WTC11 (cell line): ENCODE measurements at regions of chr3 and their contacts with region 1.

Region 1: DNA sequence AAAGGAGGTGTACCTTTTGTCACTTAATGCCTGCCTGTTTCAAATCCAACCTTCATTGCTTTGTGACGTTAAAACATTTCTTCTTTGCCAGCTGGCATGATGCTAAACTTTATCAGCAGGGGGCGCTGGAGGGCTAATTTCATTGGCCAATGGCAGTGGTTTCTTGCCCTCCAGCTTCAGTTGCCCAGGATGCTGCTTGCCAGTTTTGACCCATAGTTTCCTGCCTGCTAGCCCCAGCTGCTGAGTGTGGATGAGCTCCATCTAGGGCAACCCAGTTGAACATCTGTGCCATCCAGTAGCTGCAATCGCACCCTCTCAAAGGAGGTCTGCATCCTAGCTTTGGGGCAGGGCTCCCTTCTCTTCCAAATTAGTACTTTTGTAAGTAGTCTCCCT is 22.1 kb downstream of the ACKR2 start:
- DNase-seq: peak; percentile 88
- ATAC-seq: peak; percentile 88
- H3K4me3 Mint-ChIP-seq: no peak overlapping the region
- H3K27ac Mint-ChIP-seq: no peak overlapping the region
- H3K4me1 Mint-ChIP-seq: peaks cover 12% of the 10 kb centered on the region
- H3K27me3 Mint-ChIP-seq: no peaks in the 10 kb centered on the region
- CTCF ChIP-seq: peak; percentile 73

Region 2: GRCh38 chr3:42778644-42779043 is 52.7 kb before region 1 on chr3:
- CTCF ChIA-PET with region 1: interaction called, 17 read pairs
- POLR2A ChIA-PET with region 1: no interaction called
- DNase-seq: no peak
- ATAC-seq: no peak
- H3K4me3 Mint-ChIP-seq: no peak overlapping the region
- H3K27ac Mint-ChIP-seq: 0 out of 2 replicates have a peak overlapping the region, but pooled peaks have one; percentile 13
- H3K4me1 Mint-ChIP-seq: peaks cover 6% of the 10 kb centered on the region; the same call in 1 of the 2 replicates
- H3K27me3 Mint-ChIP-seq: no peaks in the 10 kb centered on the region
- CTCF ChIP-seq: no peak

Region 3: GRCh38 chr3:42819351-42819965 is 11.9 kb before region 1 on chr3:
- CTCF ChIA-PET with region 1: interaction called, 31 read pairs
- POLR2A ChIA-PET with region 1: interaction called, 3 read pairs
- DNase-seq: peak; percentile 40
- ATAC-seq: peak; percentile 92
- H3K4me3 Mint-ChIP-seq: no peak overlapping the region
- H3K27ac Mint-ChIP-seq: no peak overlapping the region
- H3K4me1 Mint-ChIP-seq: peaks cover 14% of the 10 kb centered on the region
- H3K27me3 Mint-ChIP-seq: no peaks in the 10 kb centered on the region; the same call in 1 of the 2 replicates
- CTCF ChIP-seq: no peak

Region 4: DNA sequence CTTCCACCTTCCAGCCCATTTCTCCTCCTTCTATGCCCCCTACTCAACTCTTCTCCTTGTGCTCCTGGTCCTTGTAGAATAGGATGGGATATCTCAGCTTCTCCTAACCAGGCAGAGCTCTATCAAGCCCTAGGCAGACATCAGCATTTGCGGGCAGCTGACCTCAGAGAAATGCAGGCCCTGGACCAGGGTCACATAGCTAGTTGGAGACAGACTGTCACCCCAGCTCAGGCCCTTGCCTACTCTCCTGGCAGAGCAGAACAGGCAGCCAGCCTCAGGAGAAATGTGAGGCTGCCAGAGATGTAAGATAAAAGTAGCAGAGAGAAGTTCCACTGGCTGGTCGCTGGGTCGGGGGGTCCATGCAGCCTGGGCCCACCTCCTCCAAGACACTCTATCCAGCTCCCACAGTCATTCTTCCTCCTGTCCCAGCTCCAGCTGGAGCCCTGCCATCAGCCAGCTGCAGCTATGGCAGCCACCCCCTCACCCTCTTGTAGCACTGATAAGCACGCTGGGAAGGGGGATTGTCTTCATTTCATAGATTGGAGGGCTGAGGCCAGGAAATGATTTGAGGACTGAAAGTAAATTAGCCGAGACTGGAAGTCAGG is 40.4 kb after region 1 on chr3:
- CTCF ChIA-PET with region 1: interaction called, 10 read pairs
- POLR2A ChIA-PET with region 1: no interaction called
- DNase-seq: no peak
- ATAC-seq: no peak
- H3K4me3 Mint-ChIP-seq: no peak overlapping the region
- H3K27ac Mint-ChIP-seq: no peak overlapping the region
- H3K4me1 Mint-ChIP-seq: no peaks in the 10 kb centered on the region
- H3K27me3 Mint-ChIP-seq: peaks cover 4% of the 10 kb centered on the region
- CTCF ChIP-seq: no peak

Region 5: DNA sequence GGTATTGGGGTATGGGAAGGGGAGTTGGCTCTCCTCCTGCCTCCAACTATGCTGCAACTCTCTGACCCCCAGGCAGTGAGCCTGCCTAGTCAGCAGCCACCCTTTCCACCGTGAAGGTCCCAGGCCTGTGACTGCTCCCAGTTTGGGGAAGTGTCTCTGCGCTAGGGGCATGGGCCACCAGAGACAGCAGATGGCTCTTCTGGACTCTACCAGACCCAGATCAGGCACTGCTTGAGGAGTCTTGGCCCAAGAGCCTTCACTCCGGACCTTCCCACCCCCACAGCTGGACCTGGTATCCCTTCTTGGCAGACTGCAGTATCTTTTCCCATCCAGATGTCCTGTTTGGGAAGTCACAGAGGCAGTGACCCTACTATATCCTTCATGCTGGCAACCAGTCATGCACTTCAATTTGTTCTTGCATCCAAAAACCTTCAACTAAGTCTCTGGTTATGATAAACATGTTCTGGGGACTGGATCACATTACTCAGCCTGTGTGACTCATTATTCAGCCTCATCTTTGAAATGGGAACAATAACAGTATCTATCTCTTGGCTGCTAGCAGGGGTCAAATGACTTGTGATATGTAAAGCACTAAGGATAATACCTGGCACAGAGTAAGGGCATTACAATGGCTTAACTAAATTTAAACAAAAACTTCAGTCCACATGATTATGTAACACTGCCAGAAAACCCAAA is 211.9 kb after region 1 on chr3:
- CTCF ChIA-PET with region 1: no interaction called
- POLR2A ChIA-PET with region 1: no interaction called
- DNase-seq: no peak
- ATAC-seq: no peak
- H3K4me3 Mint-ChIP-seq: no peak overlapping the region
- H3K27ac Mint-ChIP-seq: no peak overlapping the region
- H3K4me1 Mint-ChIP-seq: no peaks in the 10 kb centered on the region
- H3K27me3 Mint-ChIP-seq: peaks cover 3% of the 10 kb centered on the region; the same call in 1 of the 2 replicates
- CTCF ChIP-seq: no peak

Region 6: GRCh38 chr3:43094851-43095250 is 263.5 kb after region 1 on chr3:
- CTCF ChIA-PET with region 1: no interaction called
- POLR2A ChIA-PET with region 1: no interaction called
- DNase-seq: no peak
- ATAC-seq: no peak
- H3K4me3 Mint-ChIP-seq: no peak overlapping the region
- H3K27ac Mint-ChIP-seq: no peak overlapping the region
- H3K4me1 Mint-ChIP-seq: peaks cover 12% of the 10 kb centered on the region; the same call in 1 of the 2 replicates
- H3K27me3 Mint-ChIP-seq: no peaks in the 10 kb centered on the region
- CTCF ChIP-seq: no peak